ENCODE measurements at regions of chr6 and their contacts with region 1.

Region 1: DNA sequence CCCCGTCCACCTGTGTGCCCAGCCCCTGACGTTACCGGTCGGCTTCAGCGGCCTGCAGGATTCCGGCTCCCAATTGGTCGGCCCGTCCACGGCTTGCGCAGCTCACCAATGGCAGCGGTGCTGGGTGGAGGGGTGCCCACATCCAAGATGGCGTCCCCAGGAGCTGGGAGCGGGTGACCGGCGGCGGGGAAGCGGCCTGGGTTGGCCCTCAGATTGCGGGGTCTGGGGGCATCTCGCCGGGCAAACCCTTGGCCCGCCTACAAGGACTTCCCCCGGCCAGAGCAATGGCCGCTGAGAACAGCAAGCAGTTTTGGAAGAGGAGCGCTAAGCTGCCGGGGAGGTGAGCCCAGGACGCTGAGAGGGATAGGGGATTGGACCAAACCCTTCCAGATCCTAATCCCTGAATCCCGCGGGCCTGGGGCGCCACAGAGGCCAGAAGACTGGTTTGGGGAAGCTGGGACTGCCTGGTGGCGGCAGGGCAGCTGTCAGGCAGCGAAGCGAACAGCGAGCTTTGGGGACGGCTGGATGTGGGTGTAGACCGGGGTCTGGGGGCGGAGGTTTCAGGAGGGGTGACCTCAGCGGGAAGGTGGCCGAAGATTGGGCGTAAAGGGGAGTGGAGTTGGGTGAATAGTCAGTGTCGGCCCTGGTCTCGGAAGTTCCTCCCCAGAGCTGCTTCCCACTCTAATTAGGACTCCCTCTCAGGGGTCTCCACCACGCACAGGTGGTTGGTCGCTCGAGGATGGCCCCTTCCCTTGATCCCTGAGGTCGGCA is at the starts of genes TBC1D22B and TMEM217:
- DNase-seq: peak; percentile 91 to 98
- ATAC-seq: peak; percentile 100
- H3K4me3 ChIP-seq: peak within 1 kb of the TSS; percentile 86
- H3K27ac ChIP-seq: peak within 1 kb of the TSS; percentile 92 to 96
- H3K4me1 ChIP-seq: peaks cover 19% of the 10 kb centered on the region; the same call in 1 of the 3 replicates
- CTCF ChIP-seq: no peak
- EP300 ChIP-seq: no peak
- POLR2A ChIP-seq: peak; percentile 73
- RAD21 ChIP-seq: no peak
- polyA plus RNA-seq, gene TBC1D22B: 5.7 and 7.3 TPM in 2 replicates
- polyA plus RNA-seq, gene TMEM217: 1.4 and 1.6 TPM in 2 replicates

Region 2: GRCh38 chr6:37242429-37243052 is 15.3 kb before region 1 on chr6:
- CTCF ChIA-PET with region 1: interaction called, 6 read pairs
- POLR2A ChIA-PET with region 1: interaction called, 10 read pairs
- DNase-seq: peak; percentile 52 to 90
- ATAC-seq: peak; percentile 77 to 81
- H3K4me3 ChIP-seq: 0 out of 3 replicates have a peak overlapping the region, but pooled peaks have one; percentile 19
- H3K27ac ChIP-seq: peak overlapping the region; percentile 93 to 94
- H3K4me1 ChIP-seq: peaks cover 79% of the 10 kb centered on the region
- CTCF ChIP-seq: no peak
- EP300 ChIP-seq: peak in 1 of 2 experiments; percentile 37; a peak in 1 of 5 replicates
- POLR2A ChIP-seq: no peak
- RAD21 ChIP-seq: no peak

Measured in A549 (cell line).